ENCODE measurements at regions of chr13 and their contacts with region 1.

Region 1: GRCh38 chr13:94617389-94618000 is 15.8 kb downstream of the GPR180 start:
- DNase-seq: peak; percentile 62

Region 2: DNA sequence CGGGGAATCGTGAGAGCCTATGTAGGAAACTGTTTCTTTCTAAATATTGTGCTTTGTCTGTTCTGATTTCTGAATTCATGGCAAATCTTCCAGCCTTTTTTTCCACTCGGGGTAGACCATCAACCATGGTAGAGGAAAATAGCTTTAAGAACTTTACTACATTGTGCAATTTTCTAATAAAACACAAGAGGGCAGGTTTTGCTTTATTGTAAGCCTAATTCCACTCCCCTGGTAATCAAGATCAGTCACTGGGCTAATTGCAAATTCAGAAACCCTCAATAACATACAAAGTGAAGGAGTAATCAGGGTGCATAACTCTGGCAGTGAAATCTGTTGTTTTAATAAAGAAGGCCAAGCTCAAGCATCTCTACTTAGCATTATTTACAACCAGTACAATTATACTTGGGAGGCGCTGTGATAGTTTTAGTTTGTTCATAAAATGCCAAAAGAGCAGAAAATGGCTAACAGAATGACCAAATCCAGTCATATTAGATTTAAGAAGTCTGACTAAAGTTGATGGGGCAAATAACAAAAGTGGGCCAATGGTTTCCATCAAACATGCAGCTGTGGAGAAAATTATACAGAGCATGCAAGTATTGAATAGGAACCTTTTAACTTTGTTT is 181.8 kb before region 1 on chr13:
- in situ Hi-C with region 1: loop called (anchors 10 kb)
- DNase-seq: peak; percentile 75

Region 3: DNA sequence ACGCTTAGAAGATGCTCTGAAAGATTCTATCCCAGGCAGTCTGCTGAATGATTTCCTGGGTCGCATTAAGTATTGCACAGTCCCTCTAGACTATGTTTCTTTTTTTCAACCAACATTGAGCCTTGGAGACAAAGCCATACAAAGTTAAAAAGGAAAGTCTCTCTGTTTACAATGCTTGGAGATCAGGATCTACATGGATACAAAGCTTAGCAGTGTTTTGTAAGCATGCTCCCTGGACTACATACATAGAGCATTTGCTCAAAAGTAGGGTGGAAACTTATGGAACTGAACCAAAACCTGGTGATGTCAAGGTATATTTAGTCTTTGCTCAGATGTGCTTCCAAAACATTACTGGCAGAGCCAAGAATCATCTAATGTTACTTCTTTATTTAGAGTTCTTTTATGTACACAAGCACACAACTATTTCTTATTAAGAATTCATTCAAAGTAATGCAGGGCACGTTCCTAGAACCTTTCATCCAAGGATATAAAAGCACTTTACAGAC is 442.6 kb after region 1 on chr13:
- in situ Hi-C with region 1: no loop called
- DNase-seq: no peak

Region 4: DNA sequence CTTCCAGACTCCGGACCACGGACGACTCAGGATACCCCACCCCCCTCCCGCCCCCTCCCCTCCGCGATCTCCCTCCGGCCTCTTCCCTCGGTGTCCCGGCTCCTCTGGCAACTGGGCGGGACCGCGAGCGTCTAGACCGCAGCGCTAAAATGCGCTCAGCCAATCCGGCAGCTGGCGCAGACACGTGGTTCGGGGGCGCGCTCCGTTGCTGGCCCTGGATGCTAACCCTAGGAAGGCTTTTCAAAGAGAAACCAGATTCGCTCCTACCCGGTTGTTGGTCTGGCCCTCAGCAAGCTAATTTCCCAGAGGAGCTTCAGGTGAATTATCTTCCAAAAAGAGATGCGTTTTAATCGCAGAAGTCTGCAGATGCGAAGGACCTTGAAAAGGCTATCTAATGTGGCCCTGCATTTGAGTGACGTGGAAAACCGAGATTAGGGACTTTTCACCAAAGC is 1027.1 kb after region 1 on chr13 and contains the start of gene DZIP1:
- in situ Hi-C with region 1: no loop called
- DNase-seq: peak; percentile 84